CD4-positive, alpha-beta T cell (primary cell): ENCODE measurements at regions of chr6 and their contacts with region 1.

Region 1: GRCh38 chr6:46410334-46410953 is 80.8 kb downstream of the RCAN2 start:
- DNase-seq: peak in 4 of 14 experiments; percentile 2 to 77 (median 66)
- ATAC-seq: no peak
- H3K4me3 ChIP-seq: no peak overlapping the region
- H3K4me3 Mint-ChIP-seq: no peak overlapping the region
- H3K27ac ChIP-seq: no peak overlapping the region
- H3K27ac Mint-ChIP-seq: no peak overlapping the region
- H3K4me1 ChIP-seq: no peaks in the 10 kb centered on the region
- H3K4me1 Mint-ChIP-seq: no peaks in the 10 kb centered on the region
- H3K27me3 ChIP-seq: no peaks in the 10 kb centered on the region
- H3K27me3 Mint-ChIP-seq: no peaks in the 10 kb centered on the region
- CTCF ChIP-seq: peak; percentile 60

Region 2: DNA sequence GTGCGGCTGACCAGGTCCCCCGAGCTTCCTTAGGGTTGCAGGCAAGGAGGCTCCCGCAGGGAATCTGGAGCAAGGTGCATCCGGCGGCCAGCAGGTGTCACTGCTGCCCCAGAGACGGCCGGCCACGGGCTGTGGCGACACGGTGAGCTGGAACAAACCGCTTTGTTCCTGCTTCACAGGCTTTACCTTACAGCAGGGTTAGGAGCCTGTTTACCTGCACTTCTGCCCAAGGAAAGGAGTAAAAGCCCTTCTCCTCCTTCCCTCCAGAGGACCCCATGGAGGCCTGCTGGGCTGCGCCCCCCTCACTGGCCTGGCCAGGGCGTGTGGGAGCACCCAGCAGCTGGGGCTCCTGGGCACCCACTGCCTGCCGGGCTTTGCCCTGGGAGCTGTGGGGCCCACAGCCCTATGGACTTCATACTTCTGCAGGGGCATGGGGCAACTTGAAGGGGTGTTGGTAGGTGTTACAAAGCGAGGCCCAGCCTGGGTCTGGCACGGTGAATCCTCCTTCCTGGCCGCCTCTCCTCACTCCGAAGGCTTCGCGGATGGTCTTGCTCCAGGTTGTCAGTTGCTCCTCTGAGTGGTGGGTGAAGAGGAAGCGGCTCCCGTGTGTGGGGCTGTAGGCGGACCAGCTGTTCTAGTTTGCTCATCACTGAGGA is 1934.5 kb before region 1 on chr6:
- CTCF ChIA-PET with region 1: interaction called, 5 read pairs
- POLR2A ChIA-PET with region 1: interaction called, 3 read pairs
- intact Hi-C with region 1: loop called in 1 of 2 experiments (anchors 2 kb)
- DNase-seq: peak; percentile 41 to 80 (median 62)
- ATAC-seq: peak; percentile 89
- H3K4me3 ChIP-seq: no peak overlapping the region
- H3K4me3 Mint-ChIP-seq: no peak overlapping the region
- H3K27ac ChIP-seq: no peak overlapping the region
- H3K27ac Mint-ChIP-seq: no peak overlapping the region
- H3K4me1 ChIP-seq: peaks cover 9% of the 10 kb centered on the region
- H3K4me1 Mint-ChIP-seq: peaks cover 5% of the 10 kb centered on the region
- H3K27me3 ChIP-seq: peaks cover 0 to 5% of the 10 kb centered on the region in 2 experiments
- H3K27me3 Mint-ChIP-seq: no peaks in the 10 kb centered on the region
- CTCF ChIP-seq: peak; percentile 85

Region 3: DNA sequence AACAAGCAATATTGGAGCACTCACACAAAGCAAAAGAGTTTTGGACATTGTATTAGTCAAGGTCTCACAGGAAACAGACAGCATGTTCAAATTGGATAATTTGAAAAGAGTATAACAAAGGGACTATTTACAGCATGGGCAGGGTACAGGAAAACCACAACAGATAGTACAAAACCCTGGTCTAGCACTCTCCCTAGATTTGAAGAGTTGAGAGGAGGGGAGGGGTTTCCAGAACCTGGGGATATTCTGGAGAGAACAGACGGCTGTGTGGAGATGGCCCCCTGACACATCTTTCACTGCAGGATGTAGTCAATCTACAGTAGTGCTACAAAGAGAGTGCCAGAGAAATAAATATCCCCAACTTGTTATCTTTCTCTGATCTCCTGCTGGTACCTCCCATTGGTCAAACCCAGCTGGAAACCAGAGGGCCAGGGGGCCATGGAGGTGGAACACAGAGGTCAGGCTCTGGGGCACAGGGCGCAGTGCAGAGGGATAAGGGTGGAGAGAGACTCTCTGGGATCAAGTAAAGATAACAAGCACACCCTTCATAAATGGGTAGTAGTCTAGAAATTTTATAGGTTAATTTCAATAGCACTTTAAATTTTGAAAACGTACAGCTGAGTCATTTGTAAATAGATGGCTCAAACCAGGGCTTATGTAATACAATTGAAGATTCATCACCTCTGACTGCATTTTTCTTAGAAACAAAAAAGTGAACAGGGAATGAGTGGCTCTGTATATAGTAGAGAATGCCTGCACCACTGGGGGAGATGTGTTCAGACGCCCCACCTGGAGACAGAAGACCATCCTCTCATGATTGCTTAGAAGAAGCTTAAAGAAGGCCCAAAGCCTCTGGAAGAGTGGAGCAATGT is 55.1 kb after region 1 on chr6:
- CTCF ChIA-PET with region 1: no interaction called
- POLR2A ChIA-PET with region 1: no interaction called
- intact Hi-C with region 1: no loop called
- DNase-seq: no peak
- ATAC-seq: no peak
- H3K4me3 ChIP-seq: no peak overlapping the region
- H3K4me3 Mint-ChIP-seq: no peak overlapping the region
- H3K27ac ChIP-seq: no peak overlapping the region
- H3K27ac Mint-ChIP-seq: no peak overlapping the region
- H3K4me1 ChIP-seq: no peaks in the 10 kb centered on the region
- H3K4me1 Mint-ChIP-seq: no peaks in the 10 kb centered on the region
- H3K27me3 ChIP-seq: peaks cover 0 to 3% of the 10 kb centered on the region in 2 experiments
- H3K27me3 Mint-ChIP-seq: peaks cover 24% of the 10 kb centered on the region
- CTCF ChIP-seq: no peak